A673 (cell line): ENCODE measurements at regions of chr6 and their contacts with region 1.

Region 1: GRCh38 chr6:90384720-90385119 is 88.1 kb upstream of the BACH2 start:
- DNase-seq: no peak
- H3K4me3 ChIP-seq: no peak overlapping the region
- H3K27ac ChIP-seq: no peak overlapping the region
- H3K4me1 ChIP-seq: peaks cover 4% of the 10 kb centered on the region
- H3K27me3 ChIP-seq: peaks cover 6% of the 10 kb centered on the region
- CTCF ChIP-seq: no peak

Region 2: GRCh38 chr6:90184334-90185298 is 200.1 kb before region 1 on chr6:
- CTCF ChIA-PET with region 1: no interaction called
- POLR2A ChIA-PET with region 1: interaction called, 11 read pairs
- intact Hi-C with region 1: no loop called
- DNase-seq: no peak
- H3K4me3 ChIP-seq: no peak overlapping the region
- H3K27ac ChIP-seq: no peak overlapping the region
- H3K4me1 ChIP-seq: peaks cover 16% of the 10 kb centered on the region
- H3K27me3 ChIP-seq: no peaks in the 10 kb centered on the region
- CTCF ChIP-seq: no peak